H1 (cell line): ENCODE measurements at regions of chr18 and their contacts with region 1.

Region 1: GRCh38 chr18:62714671-62715435 is 488 bp upstream of the PHLPP1 start:
- DNase-seq: peak; percentile 95 to 99
- H3K4me3 ChIP-seq: peak overlapping the region; percentile 66 to 76 (median 70)
- H3K27ac ChIP-seq: peak overlapping the region; percentile 94
- H3K4me1 ChIP-seq: peaks cover 0 to 13% (median 6%) of the 10 kb centered on the region in 4 experiments; a peak in 5 of 7 replicates
- H3K27me3 ChIP-seq: no peaks in the 10 kb centered on the region
- CTCF ChIP-seq: peak; percentile 63 to 78 (median 73)
- EP300 ChIP-seq: peak in 1 of 2 experiments; percentile 66; a peak in 1 of 3 replicates
- POLR2A ChIP-seq: peak in 1 of 2 experiments; percentile 80; a peak in 2 of 3 replicates
- RAD21 ChIP-seq: peak; percentile 74 to 76

Region 2: DNA sequence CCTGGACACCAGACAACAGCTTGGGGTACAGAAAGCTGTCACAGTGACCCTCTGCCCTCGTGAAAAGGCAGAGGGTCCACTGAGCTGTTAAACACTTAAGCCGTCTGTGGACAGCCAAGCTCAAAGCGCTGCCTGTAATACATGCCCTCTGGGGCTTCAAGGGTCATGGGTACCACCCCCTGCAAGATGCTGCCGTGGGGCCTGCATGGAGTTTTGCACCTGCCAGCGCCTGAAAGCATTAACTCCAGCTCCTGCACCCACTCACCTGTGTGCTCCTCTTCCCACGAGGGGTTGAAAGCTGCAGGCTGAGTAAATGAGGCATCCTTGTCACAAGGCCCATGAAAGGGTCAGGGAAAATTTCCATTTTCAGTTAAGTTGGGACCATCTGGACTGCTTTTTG is 70.1 kb before region 1 on chr18:
- CTCF ChIA-PET with region 1: no interaction called
- POLR2A ChIA-PET with region 1: no interaction called
- DNase-seq: no peak
- H3K4me3 ChIP-seq: no peak overlapping the region
- H3K27ac ChIP-seq: no peak overlapping the region
- H3K4me1 ChIP-seq: peaks cover 0 to 6% (median under 1%) of the 10 kb centered on the region in 4 experiments; a peak in 2 of 7 replicates
- H3K27me3 ChIP-seq: no peaks in the 10 kb centered on the region
- CTCF ChIP-seq: no peak
- EP300 ChIP-seq: no peak
- POLR2A ChIP-seq: no peak
- RAD21 ChIP-seq: no peak

Region 3: DNA sequence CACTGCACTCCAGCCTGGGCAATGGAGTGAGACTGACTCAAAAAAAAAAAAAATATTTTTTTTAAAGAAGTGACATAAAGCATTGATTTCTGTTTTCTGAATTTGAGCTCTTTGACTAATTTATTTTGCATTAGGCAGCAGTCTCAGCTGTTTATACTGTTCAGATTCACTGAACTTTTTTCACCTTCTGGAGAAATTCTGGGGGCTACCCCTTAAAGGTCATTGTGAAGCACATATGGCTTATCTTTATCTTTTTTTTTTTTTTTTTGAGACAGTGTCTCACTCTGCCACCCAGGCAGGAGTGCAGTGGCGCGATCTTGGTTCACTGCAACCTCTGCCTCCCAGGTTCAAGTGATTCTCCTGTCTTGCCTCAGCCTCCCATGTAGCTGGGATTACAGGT is 13.4 kb after region 1 on chr18:
- CTCF ChIA-PET with region 1: interaction called, 3 read pairs
- POLR2A ChIA-PET with region 1: interaction called, 15 read pairs
- DNase-seq: no peak
- H3K4me3 ChIP-seq: no peak overlapping the region
- H3K27ac ChIP-seq: no peak overlapping the region
- H3K4me1 ChIP-seq: peaks cover 0 to 11% (median 5%) of the 10 kb centered on the region in 4 experiments; a peak in 4 of 7 replicates
- H3K27me3 ChIP-seq: no peaks in the 10 kb centered on the region
- CTCF ChIP-seq: no peak
- EP300 ChIP-seq: no peak
- POLR2A ChIP-seq: no peak
- RAD21 ChIP-seq: no peak